ENCODE measurements at regions of chr14 and their contacts with region 1.

Region 1: DNA sequence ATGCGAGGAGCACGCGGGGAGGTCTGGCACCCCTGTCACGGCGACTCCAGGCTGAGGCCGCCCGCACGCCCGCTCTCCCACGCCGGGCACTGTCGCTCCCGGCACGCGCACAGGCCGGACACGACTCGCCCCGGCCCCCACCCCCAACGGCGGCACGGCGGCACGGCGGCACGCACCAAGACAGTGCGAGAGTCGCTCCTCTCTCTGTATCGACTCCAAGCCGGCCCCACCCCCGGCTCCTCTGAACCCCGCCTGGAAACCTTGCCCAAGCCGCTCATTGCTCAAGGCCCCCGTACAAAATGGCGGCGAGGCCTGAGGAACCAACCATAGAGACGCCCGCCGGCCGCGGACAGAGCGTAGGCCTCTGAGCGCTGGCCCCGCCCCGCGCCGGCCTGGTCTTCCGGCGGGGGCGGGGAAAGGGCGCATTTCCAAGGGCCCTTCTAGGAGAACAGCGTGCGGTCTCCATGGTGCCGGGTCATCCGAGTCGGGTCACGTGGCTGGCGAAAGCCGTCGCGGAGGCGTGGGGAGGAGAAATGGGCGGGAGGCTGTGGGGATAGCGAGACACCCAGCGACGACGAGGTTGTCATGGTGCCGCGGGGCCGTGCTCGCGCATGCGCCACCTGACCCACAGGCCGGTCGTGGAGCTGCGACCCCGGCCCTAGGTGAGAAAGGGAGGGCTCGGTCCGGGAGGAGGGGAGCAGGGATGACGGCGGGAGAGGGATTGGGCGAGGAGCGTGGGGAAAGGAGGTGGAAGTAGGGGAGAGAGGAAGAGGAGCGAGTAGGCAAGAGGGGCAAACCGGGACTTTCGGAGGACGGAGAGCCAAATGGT is at the start of gene CIPC:
- DNase-seq: peak; percentile 100
- H3K4me3 Mint-ChIP-seq: peak within 1 kb of the TSS; percentile 98
- H3K27ac Mint-ChIP-seq: peak within 1 kb of the TSS; percentile 95
- H3K4me1 Mint-ChIP-seq: peaks cover 48% of the 10 kb centered on the region
- H3K27me3 Mint-ChIP-seq: peaks cover 6% of the 10 kb centered on the region
- total RNA-seq, gene CIPC: 14.4 to 15.1 TPM

Region 2: GRCh38 chr14:77120771-77121743 is 23.1 kb after region 1 on chr14:
- CTCF ChIA-PET with region 1: interaction called, 11 read pairs
- POLR2A ChIA-PET with region 1: interaction called, 5 read pairs
- DNase-seq: peak; percentile 61
- H3K4me3 Mint-ChIP-seq: peak overlapping the region; percentile 25
- H3K27ac Mint-ChIP-seq: peak overlapping the region; percentile 88
- H3K4me1 Mint-ChIP-seq: peaks cover 42% of the 10 kb centered on the region
- H3K27me3 Mint-ChIP-seq: peaks cover 21% of the 10 kb centered on the region

Region 3: GRCh38 chr14:77151918-77152588 is 54.1 kb after region 1 on chr14:
- CTCF ChIA-PET with region 1: no interaction called
- POLR2A ChIA-PET with region 1: no interaction called
- DNase-seq: no peak
- H3K4me3 Mint-ChIP-seq: no peak overlapping the region
- H3K27ac Mint-ChIP-seq: no peak overlapping the region
- H3K4me1 Mint-ChIP-seq: no peaks in the 10 kb centered on the region
- H3K27me3 Mint-ChIP-seq: peaks cover 25% of the 10 kb centered on the region